Psoas muscle (tissue), 8 donors: ENCODE measurements at regions of chr12 and their contacts with region 1.

Region 1: GRCh38 chr12:59736822-59737221 is 141.0 kb downstream of the SLC16A7 start:
- DNase-seq: no peak
- ATAC-seq: peak in 2 of 4 donors; percentile 30 to 48
- H3K4me3 ChIP-seq: no peak overlapping the region
- H3K27ac ChIP-seq: no peak overlapping the region
- H3K4me1 ChIP-seq: no peaks in the 10 kb centered on the region
- H3K27me3 ChIP-seq: no peaks in the 10 kb centered on the region
- CTCF ChIP-seq: no peak

Region 2: DNA sequence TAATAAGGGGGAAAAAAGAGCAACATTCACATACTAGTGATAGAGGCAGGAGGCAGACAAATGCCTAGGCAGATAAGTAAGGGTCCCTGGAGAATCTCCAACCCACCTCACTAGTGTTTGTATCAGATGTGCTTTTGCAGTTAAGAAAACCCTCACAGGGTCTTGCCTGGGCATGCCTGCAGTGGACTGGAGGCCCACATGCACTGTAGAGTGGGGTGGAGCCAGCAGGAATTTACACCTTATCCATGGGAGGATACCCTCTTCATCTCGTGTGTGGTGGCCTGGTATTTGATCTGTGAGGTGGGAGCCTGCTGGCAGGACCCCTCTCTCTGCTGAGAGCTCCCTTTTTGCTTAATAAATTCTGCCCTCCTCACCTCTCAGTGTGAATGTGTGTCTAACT is 379.0 kb before region 1 on chr12:
- intact Hi-C with region 1: loop called in 1 of 2 experiments (anchors 5 kb)
- DNase-seq: no peak
- ATAC-seq: no peak
- H3K4me3 ChIP-seq: no peak overlapping the region
- H3K27ac ChIP-seq: no peak overlapping the region
- H3K4me1 ChIP-seq: no peaks in the 10 kb centered on the region
- H3K27me3 ChIP-seq: no peaks in the 10 kb centered on the region
- CTCF ChIP-seq: no peak

Region 3: GRCh38 chr12:59834659-59835474 is 98.0 kb after region 1 on chr12:
- intact Hi-C with region 1: no loop called
- DNase-seq: no peak
- ATAC-seq: no peak
- H3K4me3 ChIP-seq: no peak overlapping the region
- H3K27ac ChIP-seq: no peak overlapping the region
- H3K4me1 ChIP-seq: no peaks in the 10 kb centered on the region
- H3K27me3 ChIP-seq: no peaks in the 10 kb centered on the region
- CTCF ChIP-seq: peak; percentile 41

Region 4: DNA sequence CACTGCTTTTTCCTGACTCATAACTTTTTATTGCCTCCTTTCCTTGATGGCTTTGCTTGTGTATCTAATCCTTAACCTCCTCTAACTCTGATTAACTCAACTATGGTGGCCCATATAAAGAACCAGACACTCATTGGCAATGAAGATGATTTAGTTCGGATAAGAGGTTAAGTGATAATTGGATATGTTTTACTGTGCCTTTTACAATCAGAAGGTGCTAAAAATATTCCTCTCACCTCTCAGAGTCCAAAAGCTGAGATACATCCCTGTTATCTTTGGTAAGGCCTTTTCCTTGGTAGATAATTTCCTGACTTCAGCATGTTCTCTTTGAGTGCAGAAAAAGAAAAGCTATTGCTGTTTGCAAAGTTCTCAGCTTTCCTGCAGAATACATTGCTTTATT is 226.7 kb after region 1 on chr12:
- intact Hi-C with region 1: no loop called
- DNase-seq: no peak
- ATAC-seq: no peak
- H3K4me3 ChIP-seq: no peak overlapping the region
- H3K27ac ChIP-seq: no peak overlapping the region
- H3K4me1 ChIP-seq: no peaks in the 10 kb centered on the region
- H3K27me3 ChIP-seq: no peaks in the 10 kb centered on the region
- CTCF ChIP-seq: no peak